Ovary (tissue), 10 donors: ENCODE measurements at regions of chr19 and their contacts with region 1.

Region 1: GRCh38 chr19:47305309-47305751 is 4.3 kb upstream of the C5AR1 start:
- DNase-seq: peak; percentile 67 to 86 (median 79)
- H3K4me3 ChIP-seq: no peak overlapping the region
- H3K27ac ChIP-seq: no peak overlapping the region
- H3K4me1 ChIP-seq: no peaks in the 10 kb centered on the region
- H3K27me3 ChIP-seq: no peaks in the 10 kb centered on the region
- CTCF ChIP-seq: peak; percentile 29 to 81 (median 70)
- EP300 ChIP-seq: peak; percentile 43
- POLR2A ChIP-seq: no peak

Region 2: GRCh38 chr19:47406711-47407416 is 101.5 kb after region 1 on chr19:
- intact Hi-C with region 1: loop called in 2 of 4 experiments (anchors 10 kb)
- DNase-seq: peak in 2 of 5 donors; percentile 39 to 51
- H3K4me3 ChIP-seq: no peak overlapping the region
- H3K27ac ChIP-seq: no peak overlapping the region
- H3K4me1 ChIP-seq: no peaks in the 10 kb centered on the region
- H3K27me3 ChIP-seq: no peaks in the 10 kb centered on the region
- CTCF ChIP-seq: no peak
- EP300 ChIP-seq: no peak
- POLR2A ChIP-seq: no peak

Region 3: DNA sequence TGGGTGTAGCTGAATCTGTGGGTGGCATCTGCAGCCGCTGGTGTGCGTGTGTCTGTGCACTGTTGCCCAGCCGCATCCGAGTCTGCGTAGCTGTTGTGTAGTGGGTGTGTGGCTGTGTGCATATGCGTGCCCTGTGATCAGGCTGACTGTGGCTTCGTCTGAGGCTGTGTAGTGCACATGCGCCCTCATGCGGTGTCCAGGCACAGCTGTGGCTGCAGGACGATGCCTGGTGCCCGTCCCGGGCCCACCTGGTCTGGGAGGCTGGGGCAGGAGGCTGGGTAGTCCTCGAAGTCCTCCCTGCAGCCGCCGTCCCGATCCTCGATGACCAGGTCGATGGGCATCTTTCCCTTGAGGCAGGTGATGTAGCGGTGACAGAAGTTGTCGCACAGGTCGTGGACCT is 109.1 kb after region 1 on chr19:
- intact Hi-C with region 1: loop called in 2 of 4 experiments (anchors 10 kb)
- DNase-seq: no peak
- H3K4me3 ChIP-seq: no peak overlapping the region
- H3K27ac ChIP-seq: no peak overlapping the region
- H3K4me1 ChIP-seq: peaks cover 3% of the 10 kb centered on the region
- H3K27me3 ChIP-seq: no peaks in the 10 kb centered on the region
- CTCF ChIP-seq: no peak
- EP300 ChIP-seq: no peak
- POLR2A ChIP-seq: no peak